ENCODE measurements at regions of chr5 and their contacts with region 1.

Region 1: GRCh38 chr5:30620481-30621085 is 572.9 kb upstream of the CDH6 start:
- DNase-seq: no peak
- H3K4me3 ChIP-seq: no peak overlapping the region
- H3K27ac ChIP-seq: no peak overlapping the region
- H3K4me1 ChIP-seq: no peaks in the 10 kb centered on the region
- H3K27me3 ChIP-seq: no peaks in the 10 kb centered on the region
- CTCF ChIP-seq: no peak
- EP300 ChIP-seq: no peak
- POLR2A ChIP-seq: no peak

Region 2: DNA sequence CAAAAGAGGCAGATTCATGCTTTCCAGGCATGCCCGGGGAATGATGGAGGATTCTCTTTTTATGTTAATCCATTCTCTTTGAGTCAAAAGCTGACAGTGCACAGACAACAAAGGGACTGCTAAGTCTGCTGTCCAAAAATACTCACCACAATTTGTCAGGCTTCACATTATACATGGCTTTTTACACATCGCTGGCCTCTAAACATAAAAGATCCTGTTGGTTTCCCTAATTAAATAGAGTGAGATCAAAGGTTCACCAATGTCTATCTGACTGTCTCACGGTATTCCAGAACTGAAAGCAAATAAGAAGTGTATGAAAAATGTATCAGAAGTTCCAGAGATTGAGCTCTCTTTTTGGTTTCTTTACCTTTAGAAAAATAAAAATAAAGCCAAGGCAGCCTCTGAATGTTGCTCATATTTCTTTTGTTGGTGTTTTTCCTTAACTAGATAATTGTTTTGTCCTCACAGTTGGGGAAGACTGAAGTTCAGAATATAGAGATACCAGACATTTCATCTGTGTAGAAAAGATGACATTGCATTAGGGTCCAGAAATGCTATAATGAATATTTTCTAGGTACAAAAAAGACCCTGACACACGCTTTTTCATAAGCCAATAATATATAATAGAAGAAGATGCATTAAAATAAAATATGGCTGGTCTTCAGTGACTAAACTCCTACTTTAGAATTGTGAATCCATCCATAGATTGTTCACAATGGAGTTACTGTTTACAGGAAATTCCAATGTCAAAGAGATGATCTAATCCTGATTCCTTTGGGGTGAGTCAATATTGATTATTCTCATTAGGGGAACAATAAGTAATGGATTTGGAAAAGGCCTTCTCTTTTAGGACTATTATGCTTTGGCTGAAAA is 115.3 kb before region 1 on chr5:
- intact Hi-C with region 1: no loop called
- DNase-seq: no peak
- H3K4me3 ChIP-seq: no peak overlapping the region
- H3K27ac ChIP-seq: no peak overlapping the region
- H3K4me1 ChIP-seq: no peaks in the 10 kb centered on the region
- H3K27me3 ChIP-seq: no peaks in the 10 kb centered on the region
- CTCF ChIP-seq: no peak
- EP300 ChIP-seq: no peak
- POLR2A ChIP-seq: no peak

Region 3: GRCh38 chr5:30607301-30607700 is 13.3 kb before region 1 on chr5:
- intact Hi-C with region 1: loop called in 1 of 4 experiments (anchors 2 kb)
- DNase-seq: no peak
- H3K4me3 ChIP-seq: no peak overlapping the region
- H3K27ac ChIP-seq: no peak overlapping the region
- H3K4me1 ChIP-seq: no peaks in the 10 kb centered on the region
- H3K27me3 ChIP-seq: no peaks in the 10 kb centered on the region
- CTCF ChIP-seq: no peak
- EP300 ChIP-seq: no peak
- POLR2A ChIP-seq: no peak

Measured in ovary (tissue), 10 donors.